Dendritic cell treated with granulocyte-macrophage colony-stimulating factor and Interleukin-4, amounts not matched to agents 40 ng/mL and 50 ng/mL, for 4 days (primary cell): ENCODE measurements at regions of chr20 and their contacts with region 1.

Region 1: DNA sequence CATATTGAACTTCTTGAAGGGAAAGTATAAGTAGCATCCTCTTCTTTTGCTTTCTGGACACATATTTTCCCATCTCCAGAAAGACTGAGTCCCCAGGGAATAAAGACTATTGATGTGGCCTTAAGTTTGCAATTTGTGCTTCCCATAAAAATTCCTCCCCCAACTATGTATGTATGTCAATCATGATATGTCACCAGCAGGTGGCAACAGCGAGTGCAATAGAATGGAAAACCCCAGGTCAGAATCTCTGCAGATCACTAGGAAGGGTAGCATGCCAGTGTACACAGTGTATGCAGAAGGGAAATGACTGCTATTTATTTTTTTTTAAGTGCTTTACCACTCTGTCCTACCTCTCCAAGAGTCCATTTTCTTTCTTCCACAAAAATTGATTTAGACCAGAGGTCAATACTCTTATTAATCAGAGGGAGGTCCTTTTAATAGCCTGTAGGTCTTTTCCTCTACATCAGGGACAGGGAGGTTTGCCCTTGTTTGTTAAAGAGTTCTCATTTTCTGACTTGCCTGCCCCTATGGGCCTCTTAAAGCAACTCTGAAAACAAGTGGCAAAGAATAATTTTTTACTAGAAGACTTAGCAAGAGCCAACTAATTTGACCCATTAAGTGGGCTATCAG is 61.4 kb downstream of the BMP2 start:
- H3K4me3 Mint-ChIP-seq: no peak overlapping the region
- H3K27ac Mint-ChIP-seq: no peak overlapping the region
- H3K4me1 Mint-ChIP-seq: no peaks in the 10 kb centered on the region
- H3K27me3 Mint-ChIP-seq: no peaks in the 10 kb centered on the region

Region 2: DNA sequence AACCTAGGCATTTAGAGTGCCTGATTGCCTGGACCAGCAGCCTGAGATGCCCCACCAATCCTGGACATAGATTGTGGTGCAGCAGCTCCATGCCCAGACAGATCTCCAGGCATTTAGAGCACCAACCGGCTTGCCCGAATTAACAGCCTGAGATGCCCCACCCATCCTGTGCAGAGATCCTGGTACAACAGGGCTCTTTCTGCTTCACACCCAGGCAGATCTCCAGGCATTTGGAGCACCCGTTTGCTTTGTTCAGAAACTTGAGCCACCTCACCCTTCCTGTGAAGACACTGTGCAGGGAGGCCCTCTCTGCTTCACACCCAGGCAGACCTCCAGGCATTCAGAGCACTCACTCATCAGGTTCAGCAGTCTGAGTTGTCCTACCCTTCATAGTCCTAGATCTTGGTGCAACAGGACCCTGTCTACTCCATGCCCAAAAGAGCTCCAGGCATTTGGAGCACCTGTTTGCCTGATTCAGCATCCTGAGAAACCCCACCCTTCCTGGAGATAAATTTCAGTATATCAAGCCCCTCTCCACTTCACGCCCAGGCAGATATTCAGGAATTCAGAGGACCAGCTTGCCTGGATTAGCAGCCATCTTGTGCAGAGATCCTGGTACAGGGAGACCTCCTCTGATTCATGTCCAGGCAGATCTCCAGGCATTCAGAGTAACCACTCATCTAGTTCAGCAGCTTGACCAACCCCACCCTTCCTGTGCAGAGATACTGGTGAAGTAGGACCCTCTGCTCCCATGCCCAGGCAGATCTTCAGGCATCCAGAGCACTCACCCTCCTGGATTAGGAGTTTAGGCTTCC is 516.9 kb before region 1 on chr20:
- intact Hi-C with region 1: no loop called
- H3K4me3 Mint-ChIP-seq: no peak overlapping the region
- H3K27ac Mint-ChIP-seq: no peak overlapping the region
- H3K4me1 Mint-ChIP-seq: no peaks in the 10 kb centered on the region
- H3K27me3 Mint-ChIP-seq: no peaks in the 10 kb centered on the region

Region 3: GRCh38 chr20:6940046-6940445 is 111.1 kb after region 1 on chr20:
- intact Hi-C with region 1: loop called (anchors 5 kb)
- H3K4me3 Mint-ChIP-seq: no peak overlapping the region
- H3K27ac Mint-ChIP-seq: no peak overlapping the region
- H3K4me1 Mint-ChIP-seq: no peaks in the 10 kb centered on the region
- H3K27me3 Mint-ChIP-seq: peaks cover 2% of the 10 kb centered on the region

Region 4: DNA sequence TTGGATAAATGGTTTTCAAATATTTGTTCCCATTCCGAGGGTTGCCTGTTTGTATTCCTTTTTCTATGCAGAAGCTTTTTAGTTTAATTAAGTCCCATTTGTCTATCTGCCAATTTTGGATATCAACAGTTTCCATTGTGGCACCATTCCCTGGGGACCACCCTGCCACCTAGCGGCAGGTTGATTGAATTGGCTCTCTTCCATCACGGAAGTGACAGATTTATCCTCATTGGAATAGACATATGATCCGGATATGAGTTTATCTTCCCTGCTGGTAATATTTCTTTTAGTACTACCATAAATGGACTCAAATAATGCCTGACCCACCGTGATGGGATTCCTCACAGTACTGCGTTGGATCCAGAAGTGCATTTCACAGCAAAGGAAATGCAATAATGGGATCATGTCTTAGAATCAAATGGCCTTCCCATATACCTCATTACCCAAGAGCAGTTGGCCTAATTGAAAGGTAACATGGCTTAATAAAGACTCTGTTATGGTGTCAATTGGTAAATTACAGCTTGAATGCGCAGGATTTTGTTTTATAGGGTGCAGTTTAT is 265.6 kb after region 1 on chr20:
- intact Hi-C with region 1: loop called (anchors 1 kb)
- H3K4me3 Mint-ChIP-seq: no peak overlapping the region
- H3K27ac Mint-ChIP-seq: no peak overlapping the region
- H3K4me1 Mint-ChIP-seq: no peaks in the 10 kb centered on the region
- H3K27me3 Mint-ChIP-seq: no peaks in the 10 kb centered on the region